ENCODE measurements at regions of chr5 and their contacts with region 1.

Region 1: DNA sequence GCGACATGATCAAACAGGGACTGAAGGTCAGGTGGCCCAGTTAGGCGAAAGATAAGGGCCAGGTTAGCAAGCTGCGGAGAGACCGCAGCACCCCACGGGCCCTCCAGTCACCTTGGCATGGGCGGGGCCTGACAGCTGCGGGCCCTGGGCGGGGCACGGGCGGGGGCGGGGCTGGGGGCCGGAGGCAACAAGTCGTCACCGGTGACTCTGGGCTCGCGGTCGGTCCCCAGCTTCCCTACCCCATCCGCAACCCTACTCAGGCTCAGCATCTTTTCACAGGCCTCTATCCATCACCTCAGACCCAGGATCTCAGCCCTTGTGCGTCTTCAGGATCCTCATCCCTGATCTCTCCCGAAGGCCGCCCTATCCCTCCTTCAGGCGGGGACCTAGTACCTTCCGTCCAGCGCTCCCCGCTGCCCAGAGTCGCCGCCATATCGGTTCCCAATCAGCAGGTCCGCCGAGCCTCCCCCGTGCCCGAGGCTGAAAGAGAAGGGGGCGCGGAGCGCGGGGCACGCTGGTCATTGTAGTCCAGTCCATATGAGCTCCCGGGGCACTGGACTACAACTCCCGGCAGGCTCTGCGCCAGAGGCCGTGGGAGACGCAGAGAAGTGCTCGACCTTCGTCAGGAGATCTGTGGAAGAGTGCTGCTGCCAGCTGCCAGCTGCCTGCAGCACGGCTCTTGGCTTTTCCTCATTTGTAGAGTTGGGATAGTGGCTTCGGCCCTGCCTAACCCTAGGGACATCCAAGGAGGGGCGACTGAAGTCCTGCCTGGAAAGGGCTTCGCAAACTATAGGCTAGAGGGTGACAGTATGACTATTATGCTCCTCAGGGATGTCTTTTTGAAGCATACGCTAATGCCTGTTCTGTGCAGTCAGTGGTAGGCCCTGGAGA is at the start of gene DNAJC18:
- DNase-seq: peak; percentile 84 to 90 (median 86)
- H3K4me3 ChIP-seq: peak within 1 kb of the TSS; percentile 83 to 91
- H3K4me3 Mint-ChIP-seq: peak within 1 kb of the TSS; percentile 96 to 99 (median 98)
- H3K27ac ChIP-seq: peak within 1 kb of the TSS; percentile 99
- H3K27ac Mint-ChIP-seq: peak within 1 kb of the TSS; percentile 93 to 100 (median 100)
- H3K4me1 ChIP-seq: peaks cover 31% of the 10 kb centered on the region
- H3K4me1 Mint-ChIP-seq: peaks cover 32 to 63% (median 41%) of the 10 kb centered on the region in 4 donors
- H3K27me3 ChIP-seq: no peaks in the 10 kb centered on the region
- H3K27me3 Mint-ChIP-seq: no peaks in the 10 kb centered on the region
- total RNA-seq, gene DNAJC18: 6.2 to 7.3 TPM

Region 2: DNA sequence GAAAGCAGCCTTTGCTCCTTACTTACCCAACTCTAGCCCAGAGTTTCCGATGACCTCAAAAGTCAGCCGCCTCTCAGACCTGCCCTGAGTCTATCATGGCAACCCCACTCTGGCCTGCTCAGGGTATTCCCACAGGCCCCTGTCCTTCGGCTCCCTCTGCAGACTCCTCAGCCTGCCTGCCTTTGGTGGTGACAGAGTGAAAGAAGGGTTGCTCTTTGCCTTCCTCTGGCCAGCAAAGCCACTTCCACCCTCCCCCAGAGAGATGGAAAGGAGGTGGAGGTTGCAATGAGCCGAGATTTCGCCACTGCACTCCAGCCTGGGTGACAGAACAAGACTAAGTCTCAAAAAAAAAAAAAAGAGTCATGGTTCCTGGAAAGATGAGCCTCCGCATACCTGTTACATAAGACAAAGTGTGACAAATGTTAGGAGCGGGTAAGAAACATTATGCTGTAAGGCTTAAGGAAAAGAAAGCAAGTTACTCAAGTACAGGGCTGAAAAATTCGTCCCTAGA is 29.2 kb after region 1 on chr5:
- CTCF ChIA-PET with region 1: no interaction called
- POLR2A ChIA-PET with region 1: interaction called, 171 read pairs
- intact Hi-C with region 1: no loop called
- DNase-seq: no peak
- H3K4me3 ChIP-seq: no peak overlapping the region
- H3K4me3 Mint-ChIP-seq: peak overlapping the region in 7 of 8 donors; percentile 38 to 84 (median 71)
- H3K27ac ChIP-seq: no peak overlapping the region
- H3K27ac Mint-ChIP-seq: peak overlapping the region; percentile 67 to 94 (median 85)
- H3K4me1 ChIP-seq: peaks cover 54% of the 10 kb centered on the region
- H3K4me1 Mint-ChIP-seq: peaks cover 32 to 55% (median 45%) of the 10 kb centered on the region in 4 donors
- H3K27me3 ChIP-seq: no peaks in the 10 kb centered on the region
- H3K27me3 Mint-ChIP-seq: no peaks in the 10 kb centered on the region

Region 3: GRCh38 chr5:139474890-139475791 is 35.9 kb after region 1 on chr5:
- CTCF ChIA-PET with region 1: interaction called, 6 read pairs
- POLR2A ChIA-PET with region 1: interaction called, 111 read pairs
- intact Hi-C with region 1: no loop called
- DNase-seq: peak in 3 of 5 donors; percentile 32 to 57 (median 45)
- H3K4me3 ChIP-seq: no peak overlapping the region
- H3K4me3 Mint-ChIP-seq: peak overlapping the region; percentile 50 to 87 (median 76)
- H3K27ac ChIP-seq: peak overlapping the region; percentile 23
- H3K27ac Mint-ChIP-seq: peak overlapping the region; percentile 77 to 95 (median 93)
- H3K4me1 ChIP-seq: peaks cover 94% of the 10 kb centered on the region
- H3K4me1 Mint-ChIP-seq: peaks cover 53 to 94% (median 75%) of the 10 kb centered on the region in 4 donors
- H3K27me3 ChIP-seq: no peaks in the 10 kb centered on the region
- H3K27me3 Mint-ChIP-seq: no peaks in the 10 kb centered on the region

Region 4: GRCh38 chr5:139670369-139671095 is 231.3 kb after region 1 on chr5:
- CTCF ChIA-PET with region 1: no interaction called
- POLR2A ChIA-PET with region 1: no interaction called
- intact Hi-C with region 1: no loop called
- DNase-seq: no peak
- H3K4me3 ChIP-seq: no peak overlapping the region
- H3K4me3 Mint-ChIP-seq: peak overlapping the region in 7 of 8 donors; percentile 10 to 87 (median 49)
- H3K27ac ChIP-seq: no peak overlapping the region
- H3K27ac Mint-ChIP-seq: peak overlapping the region in 6 of 7 donors; percentile 1 to 85 (median 56)
- H3K4me1 ChIP-seq: peaks cover 43% of the 10 kb centered on the region
- H3K4me1 Mint-ChIP-seq: peaks cover 14 to 47% (median 31%) of the 10 kb centered on the region in 4 donors
- H3K27me3 ChIP-seq: no peaks in the 10 kb centered on the region
- H3K27me3 Mint-ChIP-seq: no peaks in the 10 kb centered on the region

Measured in CD4-positive, alpha-beta memory T cell (primary cell).